ENCODE measurements at regions of chr1 and their contacts with region 1.

Region 1: DNA sequence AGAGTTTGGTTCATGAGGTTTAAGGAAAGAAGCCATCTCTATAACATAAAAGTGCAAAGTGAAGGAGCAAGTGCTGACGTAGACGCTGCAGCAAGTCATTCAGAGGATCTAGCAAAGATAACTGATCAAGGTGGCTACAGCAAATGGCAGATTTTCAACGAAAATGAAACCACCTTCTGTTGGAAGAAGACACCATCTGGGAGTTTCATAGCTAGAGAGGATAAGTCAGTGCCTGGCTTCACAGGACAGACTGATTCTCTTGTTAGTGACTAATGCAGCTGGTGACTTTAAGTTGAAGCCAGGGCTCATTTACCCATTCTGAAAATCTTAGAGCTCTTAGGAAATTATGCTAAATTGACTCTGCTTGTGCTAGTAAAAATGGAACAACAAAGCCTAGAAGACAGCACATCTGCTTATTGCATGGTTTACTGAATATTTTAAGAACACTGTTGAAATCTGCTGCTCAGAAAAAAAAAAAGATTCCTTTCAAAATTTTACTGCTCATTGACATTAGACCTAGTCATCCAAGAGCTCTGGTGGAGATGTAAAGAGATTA is 10.5 kb downstream of the MAEL start:
- DNase-seq: no peak
- ATAC-seq: no peak

Region 2: GRCh38 chr1:166884040-166884642 is 115.4 kb before region 1 on chr1:
- intact Hi-C with region 1: no loop called
- DNase-seq: peak; percentile 73
- ATAC-seq: peak; percentile 72

Region 3: DNA sequence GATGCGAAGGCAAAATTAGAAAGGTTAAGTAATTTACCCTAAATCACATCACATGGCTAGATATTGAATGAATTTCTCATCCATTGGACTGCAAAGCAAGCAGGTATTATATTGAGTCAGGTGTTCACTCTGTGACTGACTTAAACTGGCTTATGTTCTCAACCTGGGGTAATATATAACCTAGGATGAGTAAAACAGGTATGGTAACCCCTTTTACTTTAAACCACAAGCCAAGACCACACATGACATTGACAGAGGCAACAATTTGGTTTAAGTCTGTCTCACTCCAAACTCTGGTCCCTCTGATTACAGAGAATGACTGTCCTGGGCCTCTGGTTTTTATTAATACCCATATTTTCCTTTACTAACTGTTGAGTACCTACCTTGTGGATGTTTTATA is 22.8 kb after region 1 on chr1:
- intact Hi-C with region 1: no loop called
- DNase-seq: no peak
- ATAC-seq: no peak

Region 4: DNA sequence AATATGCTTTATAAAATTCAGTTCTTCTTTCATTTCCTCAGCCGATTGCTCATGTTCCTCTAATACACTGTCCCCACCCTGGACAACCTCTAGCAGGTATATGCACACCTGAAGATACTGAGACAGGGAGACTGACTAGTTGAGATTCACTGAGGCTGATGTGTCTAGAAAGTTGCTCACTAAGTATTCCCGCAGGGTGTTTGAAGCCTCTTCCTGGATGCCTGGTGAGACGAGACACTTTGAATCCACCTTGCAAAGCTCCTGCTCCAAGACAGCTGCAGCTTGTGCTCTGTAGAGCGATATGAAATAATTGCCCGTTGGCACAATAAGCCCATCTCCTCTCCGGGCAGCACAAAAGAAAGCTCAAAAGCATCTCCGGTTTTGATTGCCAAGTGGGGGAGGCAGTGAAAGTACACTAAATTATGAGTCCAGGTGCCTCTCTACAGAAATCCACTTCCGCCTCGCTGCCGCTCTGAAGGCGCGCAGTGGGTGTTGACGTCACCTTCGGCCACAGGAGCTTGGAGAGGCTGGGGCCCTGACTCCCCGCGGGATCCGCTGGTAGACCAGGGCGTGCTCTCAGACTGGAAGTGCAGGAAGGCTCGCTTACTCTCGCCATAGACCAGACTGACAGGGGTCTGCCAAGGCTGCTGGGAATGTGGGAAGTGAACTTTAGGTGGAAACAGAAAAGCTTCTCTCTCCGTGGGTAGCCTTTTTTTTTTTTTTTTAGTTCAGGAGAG is 44.3 kb after region 1 on chr1:
- intact Hi-C with region 1: loop called (anchors 5 kb)
- DNase-seq: no peak
- ATAC-seq: peak; percentile 74

Measured in sciatic nerve (tissue), 2 donors.